ENCODE measurements at regions of chr5 and their contacts with region 1.

Region 1: GRCh38 chr5:35089334-35090314 is 41.9 kb upstream of the AGXT2 start:
- DNase-seq: peak; percentile 64
- ATAC-seq: peak; percentile 85
- H3K4me3 ChIP-seq: no peak overlapping the region
- H3K27ac ChIP-seq: no peak overlapping the region
- H3K4me1 ChIP-seq: peaks cover 13% of the 10 kb centered on the region
- H3K27me3 ChIP-seq: no peaks in the 10 kb centered on the region
- CTCF ChIP-seq: peak; percentile 89
- EP300 ChIP-seq: no peak
- POLR2A ChIP-seq: no peak
- RAD21 ChIP-seq: peak; percentile 93

Region 2: DNA sequence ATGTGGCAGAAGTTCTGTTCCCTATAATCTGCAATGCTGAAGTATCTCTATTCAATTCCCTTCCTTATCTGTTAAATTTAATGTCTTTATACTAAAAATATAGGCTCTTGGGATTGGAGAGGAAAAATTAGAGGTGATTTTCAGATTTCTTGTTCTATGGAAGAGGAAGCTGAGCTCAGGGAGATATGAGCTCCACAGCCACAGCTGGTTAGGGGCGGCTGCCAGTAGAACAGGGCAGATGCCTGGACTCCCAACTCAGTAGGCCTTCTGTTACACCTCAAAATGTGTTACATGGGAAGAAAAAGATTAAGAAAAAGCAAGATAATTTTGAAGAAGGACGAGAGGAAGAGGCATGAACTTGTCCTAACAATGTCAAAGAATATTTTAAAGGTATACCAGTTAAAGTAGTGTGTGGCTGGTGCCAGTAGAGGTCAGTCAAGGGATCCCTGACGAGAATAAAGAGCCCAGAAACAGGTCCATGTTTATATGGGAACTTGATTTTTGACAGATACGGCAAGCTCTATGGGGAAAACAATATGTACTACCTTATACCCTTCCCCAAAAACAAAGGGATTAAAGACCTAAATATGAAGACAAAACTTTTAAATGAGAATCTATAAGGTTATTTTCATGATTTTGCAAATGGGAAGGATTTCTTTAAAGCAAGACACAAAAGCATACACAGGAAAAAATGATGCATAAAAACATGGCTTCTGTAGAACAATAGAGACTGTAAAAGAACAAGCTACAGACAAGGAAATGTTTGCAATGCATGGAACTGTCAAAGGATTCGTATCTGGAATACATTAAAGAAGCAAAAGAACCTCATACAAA is 131.6 kb before region 1 on chr5:
- CTCF ChIA-PET with region 1: no interaction called
- POLR2A ChIA-PET with region 1: no interaction called
- in situ Hi-C with region 1: no loop called
- intact Hi-C with region 1: no loop called
- DNase-seq: peak; percentile 30
- ATAC-seq: peak; percentile 94
- H3K4me3 ChIP-seq: no peak overlapping the region
- H3K27ac ChIP-seq: no peak overlapping the region
- H3K4me1 ChIP-seq: peaks cover 7% of the 10 kb centered on the region
- H3K27me3 ChIP-seq: no peaks in the 10 kb centered on the region
- CTCF ChIP-seq: peak; percentile 67
- EP300 ChIP-seq: no peak
- POLR2A ChIP-seq: no peak
- RAD21 ChIP-seq: peak; percentile 32; the same call in 1 of the 2 replicates

Region 3: GRCh38 chr5:35202319-35203111 is 112.9 kb after region 1 on chr5:
- CTCF ChIA-PET with region 1: interaction called, 59 read pairs
- POLR2A ChIA-PET with region 1: no interaction called
- in situ Hi-C with region 1: loop called (anchors 5 kb)
- intact Hi-C with region 1: loop called (anchors 1 kb)
- DNase-seq: peak; percentile 70
- ATAC-seq: peak; percentile 97
- H3K4me3 ChIP-seq: no peak overlapping the region
- H3K27ac ChIP-seq: no peak overlapping the region
- H3K4me1 ChIP-seq: peaks cover 19% of the 10 kb centered on the region
- H3K27me3 ChIP-seq: no peaks in the 10 kb centered on the region
- CTCF ChIP-seq: peak; percentile 85
- EP300 ChIP-seq: no peak
- POLR2A ChIP-seq: no peak
- RAD21 ChIP-seq: peak; percentile 64; the same call in 1 of the 2 replicates

Region 4: GRCh38 chr5:35213611-35214010 is 124.0 kb after region 1 on chr5:
- CTCF ChIA-PET with region 1: no interaction called
- POLR2A ChIA-PET with region 1: no interaction called
- in situ Hi-C with region 1: no loop called
- intact Hi-C with region 1: no loop called
- DNase-seq: no peak
- ATAC-seq: no peak
- H3K4me3 ChIP-seq: no peak overlapping the region
- H3K27ac ChIP-seq: no peak overlapping the region
- H3K4me1 ChIP-seq: no peaks in the 10 kb centered on the region
- H3K27me3 ChIP-seq: no peaks in the 10 kb centered on the region
- CTCF ChIP-seq: no peak
- EP300 ChIP-seq: no peak
- POLR2A ChIP-seq: no peak
- RAD21 ChIP-seq: no peak

Region 5: DNA sequence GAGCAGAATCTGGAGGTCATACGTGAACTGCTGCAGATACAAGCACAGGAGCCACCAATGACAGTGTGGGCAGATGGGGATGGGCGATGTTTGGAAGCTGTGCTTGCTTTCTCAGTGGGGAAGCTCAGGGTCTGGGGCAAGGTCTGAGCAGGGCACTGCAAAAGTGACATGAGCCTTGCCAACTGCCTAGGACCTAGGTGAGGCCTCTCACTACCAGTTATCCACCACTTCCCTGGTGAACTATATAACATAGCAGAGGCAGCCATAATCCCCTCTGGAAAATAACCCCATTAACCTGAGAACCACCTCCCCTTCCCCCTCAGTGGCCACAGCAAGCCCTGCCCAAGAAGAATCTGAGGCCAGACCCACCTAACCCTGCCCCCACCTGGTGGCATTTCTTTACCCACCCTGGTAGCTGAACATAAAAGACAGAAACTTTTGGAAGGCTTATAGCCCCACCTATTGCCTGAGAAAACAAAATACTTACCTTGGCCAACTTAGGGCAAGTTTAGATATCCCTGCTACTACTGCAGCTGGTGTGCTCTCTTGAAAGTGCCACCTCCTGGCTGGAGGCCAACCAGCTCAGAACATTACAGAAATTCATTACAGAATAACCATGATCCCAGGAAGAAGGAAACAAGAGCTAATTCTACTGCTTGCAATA is 509.2 kb after region 1 on chr5:
- CTCF ChIA-PET with region 1: interaction called, 6 read pairs
- POLR2A ChIA-PET with region 1: no interaction called
- in situ Hi-C with region 1: loop called (anchors 10 kb)
- intact Hi-C with region 1: loop called (anchors 1 kb)
- DNase-seq: peak; percentile 62
- ATAC-seq: peak; percentile 95
- H3K4me3 ChIP-seq: no peak overlapping the region
- H3K27ac ChIP-seq: no peak overlapping the region
- H3K4me1 ChIP-seq: no peaks in the 10 kb centered on the region
- H3K27me3 ChIP-seq: no peaks in the 10 kb centered on the region
- CTCF ChIP-seq: peak; percentile 79
- EP300 ChIP-seq: no peak
- POLR2A ChIP-seq: no peak
- RAD21 ChIP-seq: peak; percentile 65; the same call in 1 of the 2 replicates